ENCODE measurements at regions of chr15 and their contacts with region 1.

Region 1: DNA sequence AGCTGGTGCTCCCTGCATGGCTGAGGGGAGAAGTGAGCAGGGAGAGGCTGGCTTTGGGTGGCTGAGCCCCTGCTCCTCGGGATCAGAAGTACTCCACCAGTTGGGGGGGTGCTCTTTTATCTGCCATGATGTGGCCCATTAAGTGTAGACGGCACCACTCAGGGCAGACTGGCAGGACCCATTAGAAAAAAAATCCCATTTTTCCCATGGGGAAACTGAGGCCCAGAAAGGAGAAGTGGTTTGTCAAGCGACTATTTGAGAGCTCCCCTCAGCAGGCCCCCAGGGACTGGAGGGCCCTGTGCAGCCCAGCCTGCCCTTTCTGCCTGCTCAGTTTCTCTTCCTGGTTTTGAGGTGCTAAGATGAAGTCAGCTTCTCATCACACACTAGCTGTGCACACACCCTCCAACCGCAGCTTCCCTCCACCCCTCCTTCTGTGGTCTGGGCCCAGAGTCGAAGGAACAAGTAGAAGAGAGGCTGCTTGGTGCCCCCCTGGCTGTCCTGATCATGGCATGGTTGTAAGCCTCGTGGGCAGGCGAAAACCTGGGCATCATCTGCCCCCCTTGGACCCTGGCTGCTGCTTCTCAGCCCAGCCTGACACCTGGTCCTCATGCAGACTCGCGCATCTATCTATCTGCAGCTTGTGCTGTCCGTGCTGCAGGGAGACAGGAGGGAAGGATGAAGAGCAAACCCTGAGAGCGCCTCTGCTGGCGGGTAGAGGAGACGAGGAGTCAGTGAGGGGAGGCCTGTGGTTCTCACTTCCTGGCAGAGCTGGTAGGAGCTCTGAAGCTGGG is 5.6 kb downstream of the CSK start:
- DNase-seq: peak; percentile 98
- H3K4me3 Mint-ChIP-seq: peak overlapping the region; percentile 93
- H3K27ac Mint-ChIP-seq: peak overlapping the region; percentile 99
- H3K4me1 Mint-ChIP-seq: peaks cover 55% of the 10 kb centered on the region
- H3K27me3 Mint-ChIP-seq: no peaks in the 10 kb centered on the region

Region 2: DNA sequence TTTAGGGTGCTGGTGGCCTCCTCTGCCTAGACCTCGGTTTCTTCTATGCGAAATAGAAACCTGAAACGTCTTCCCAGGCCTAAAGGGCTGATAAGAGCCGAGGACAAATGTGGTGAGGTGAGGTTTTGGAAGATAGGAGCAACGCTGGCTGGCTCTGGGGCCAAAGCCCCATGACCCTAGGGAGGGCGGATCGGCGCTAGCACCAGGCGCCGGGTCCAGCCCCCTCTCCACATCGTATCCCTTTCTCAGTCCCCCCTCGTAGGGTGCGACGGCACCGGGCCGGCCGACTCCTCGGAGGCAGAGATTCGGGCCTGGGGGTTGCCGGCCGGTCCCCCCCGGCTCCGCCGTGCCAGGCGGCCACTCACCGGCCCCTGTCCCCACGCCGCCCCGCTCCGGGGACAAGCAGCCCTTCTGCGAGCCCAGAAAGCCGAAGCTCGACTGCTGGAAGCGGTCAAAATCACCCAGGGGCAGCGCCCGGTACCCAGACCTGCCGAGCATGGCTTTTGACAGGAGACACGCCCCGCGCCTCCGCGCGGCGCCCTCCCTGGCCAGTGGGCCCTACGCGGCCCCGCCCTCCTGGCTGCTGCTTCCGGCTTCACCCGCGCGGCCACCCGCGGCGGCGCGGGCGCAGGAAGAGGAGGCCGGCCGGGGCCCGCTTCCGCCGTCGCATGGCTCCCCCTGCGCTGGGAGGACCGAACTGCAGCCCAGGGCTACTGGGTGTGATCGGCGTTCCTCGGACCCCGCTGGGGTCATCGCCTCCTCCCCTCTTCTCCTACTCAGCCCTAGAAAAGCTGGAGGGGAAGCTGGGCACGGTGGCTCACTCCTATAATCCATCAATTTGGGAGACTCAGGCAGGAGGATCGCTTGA is 795.5 kb before region 1 on chr15 and contains the start of gene STOML1:
- CTCF ChIA-PET with region 1: no interaction called
- intact Hi-C with region 1: loop called (anchors 5 kb)
- DNase-seq: peak; percentile 95
- H3K4me3 Mint-ChIP-seq: peak within 1 kb of the TSS; percentile 95
- H3K27ac Mint-ChIP-seq: peak within 1 kb of the TSS; percentile 83
- H3K4me1 Mint-ChIP-seq: peaks cover 49% of the 10 kb centered on the region
- H3K27me3 Mint-ChIP-seq: no peaks in the 10 kb centered on the region
- total RNA-seq, gene STOML1: 8.7 to 9.5 TPM

Region 3: GRCh38 chr15:74723754-74724334 is 63.6 kb before region 1 on chr15:
- CTCF ChIA-PET with region 1: no interaction called
- intact Hi-C with region 1: no loop called
- DNase-seq: no peak
- H3K4me3 Mint-ChIP-seq: no peak overlapping the region
- H3K27ac Mint-ChIP-seq: no peak overlapping the region
- H3K4me1 Mint-ChIP-seq: peaks cover 11% of the 10 kb centered on the region
- H3K27me3 Mint-ChIP-seq: peaks cover 14% of the 10 kb centered on the region